ENCODE measurements at regions of chr16 and their contacts with region 1.

Region 1: DNA sequence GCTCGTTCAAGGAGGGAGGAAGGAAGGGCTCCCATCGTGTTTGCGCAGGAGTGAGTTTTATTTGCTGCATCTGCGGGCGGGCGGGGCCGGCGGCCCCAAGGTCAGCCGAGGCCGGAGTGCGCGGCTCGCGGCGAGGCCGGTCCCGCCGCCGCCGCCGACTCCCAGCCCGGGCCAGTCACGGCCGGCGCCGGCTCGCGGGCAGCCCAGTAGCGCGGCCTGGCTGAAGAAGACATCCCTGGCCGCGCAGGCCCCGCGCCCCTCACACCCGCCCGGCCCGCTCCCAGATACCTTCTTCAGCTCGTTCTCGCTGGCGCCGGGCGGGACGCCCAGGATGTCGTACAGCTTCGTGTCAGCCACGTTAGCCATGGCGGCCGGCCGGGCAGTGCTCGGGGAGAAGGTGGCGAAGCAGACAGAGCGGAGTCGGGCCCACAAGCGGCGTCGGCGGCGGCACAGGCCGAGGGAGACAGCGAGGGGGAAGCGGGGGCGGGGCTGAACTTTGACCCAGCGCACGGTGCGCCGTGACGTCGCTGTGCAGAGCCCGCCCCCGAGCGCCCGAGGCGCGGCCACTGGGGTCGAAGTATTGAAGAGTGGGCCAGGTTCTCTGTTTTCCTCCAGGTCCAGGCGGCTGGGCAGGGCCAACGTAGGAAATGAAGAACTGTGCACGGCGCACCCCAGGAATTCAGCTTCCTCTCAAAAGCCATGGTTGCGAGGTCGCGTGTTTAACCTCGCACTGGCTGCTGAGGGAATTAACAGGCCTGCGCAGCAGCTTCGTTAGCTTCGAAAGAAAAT is at the start of gene DNAJA2:
- DNase-seq: peak; percentile 93
- ATAC-seq: peak; percentile 92
- H3K4me3 Mint-ChIP-seq: peak within 1 kb of the TSS; percentile 96
- H3K27ac Mint-ChIP-seq: peak within 1 kb of the TSS; percentile 97
- H3K4me1 Mint-ChIP-seq: peaks cover 45% of the 10 kb centered on the region
- H3K27me3 Mint-ChIP-seq: no peaks in the 10 kb centered on the region
- total RNA-seq, gene DNAJA2: 53.9 to 54.1 TPM

Region 2: GRCh38 chr16:46961373-46962353 is 11.7 kb before region 1 on chr16:
- CTCF ChIA-PET with region 1: interaction called, 5 read pairs
- POLR2A ChIA-PET with region 1: interaction called, 38 read pairs
- DNase-seq: peak; percentile 65
- ATAC-seq: peak; percentile 92
- H3K4me3 Mint-ChIP-seq: no peak overlapping the region
- H3K27ac Mint-ChIP-seq: peak overlapping the region; percentile 82
- H3K4me1 Mint-ChIP-seq: peaks cover 22% of the 10 kb centered on the region
- H3K27me3 Mint-ChIP-seq: no peaks in the 10 kb centered on the region

Region 3: GRCh38 chr16:47073223-47074155 is 100.1 kb after region 1 on chr16:
- CTCF ChIA-PET with region 1: no interaction called
- POLR2A ChIA-PET with region 1: no interaction called
- DNase-seq: no peak
- ATAC-seq: no peak
- H3K4me3 Mint-ChIP-seq: no peak overlapping the region
- H3K27ac Mint-ChIP-seq: no peak overlapping the region
- H3K4me1 Mint-ChIP-seq: peaks cover 6% of the 10 kb centered on the region
- H3K27me3 Mint-ChIP-seq: no peaks in the 10 kb centered on the region

Measured in activated CD8-positive, alpha-beta T cell treated with anti-CD3 and anti-CD28 coated beads, Interleukin-2, amount 10 ng/mL, durations not matched to agents 7 days and 5 days (primary cell).